SK-N-SH (cell line): ENCODE measurements at regions of chr4 and their contacts with region 1.

Region 1: GRCh38 chr4:53476232-53477037 is 99.0 kb downstream of the FIP1L1 start:
- DNase-seq: no peak
- H3K4me3 ChIP-seq: no peak overlapping the region
- H3K27ac ChIP-seq: peak overlapping the region in 1 of 2 experiments; percentile 95; a peak in 2 of 4 replicates
- H3K4me1 ChIP-seq: peaks cover 0 to 9% of the 10 kb centered on the region in 2 experiments; a peak in 2 of 4 replicates
- H3K27me3 ChIP-seq: no peaks in the 10 kb centered on the region
- CTCF ChIP-seq: 0 out of 2 replicates have a peak, but pooled peaks have one; percentile 6
- EP300 ChIP-seq: peak in 1 of 2 experiments; percentile 70; a peak in 1 of 4 replicates
- RAD21 ChIP-seq: no peak

Region 2: GRCh38 chr4:53450773-53451172 is 25.7 kb before region 1 on chr4:
- CTCF ChIA-PET with region 1: no interaction called
- POLR2A ChIA-PET with region 1: no interaction called
- DNase-seq: no peak
- H3K4me3 ChIP-seq: no peak overlapping the region
- H3K27ac ChIP-seq: no peak overlapping the region
- H3K4me1 ChIP-seq: no peaks in the 10 kb centered on the region; a peak in 1 of 4 replicates
- H3K27me3 ChIP-seq: no peaks in the 10 kb centered on the region
- CTCF ChIP-seq: no peak
- EP300 ChIP-seq: no peak
- RAD21 ChIP-seq: no peak

Region 3: GRCh38 chr4:53490965-53491622 is 14.7 kb after region 1 on chr4:
- CTCF ChIA-PET with region 1: interaction called, 36 read pairs
- POLR2A ChIA-PET with region 1: no interaction called
- DNase-seq: peak; percentile 50
- H3K4me3 ChIP-seq: no peak overlapping the region
- H3K27ac ChIP-seq: peak overlapping the region in 1 of 2 experiments; percentile 74; a peak in 3 of 4 replicates
- H3K4me1 ChIP-seq: peaks cover 0 to 6% of the 10 kb centered on the region in 2 experiments; a peak in 2 of 4 replicates
- H3K27me3 ChIP-seq: no peaks in the 10 kb centered on the region
- CTCF ChIP-seq: peak; percentile 86
- EP300 ChIP-seq: no peak
- RAD21 ChIP-seq: peak; percentile 67